ENCODE measurements at regions of chr7 and their contacts with region 1.

Region 1: GRCh38 chr7:134605973-134606923 is 40.4 kb upstream of the BPGM start:
- DNase-seq: peak; percentile 62 to 67
- ATAC-seq: peak; percentile 87 to 96 (median 90)
- H3K4me3 ChIP-seq: no peak overlapping the region
- H3K27ac ChIP-seq: no peak overlapping the region
- H3K4me1 ChIP-seq: no peaks in the 10 kb centered on the region
- H3K27me3 ChIP-seq: peaks cover 0 to 3% (median 0%) of the 10 kb centered on the region in 3 donors
- CTCF ChIP-seq: peak; percentile 94

Region 2: DNA sequence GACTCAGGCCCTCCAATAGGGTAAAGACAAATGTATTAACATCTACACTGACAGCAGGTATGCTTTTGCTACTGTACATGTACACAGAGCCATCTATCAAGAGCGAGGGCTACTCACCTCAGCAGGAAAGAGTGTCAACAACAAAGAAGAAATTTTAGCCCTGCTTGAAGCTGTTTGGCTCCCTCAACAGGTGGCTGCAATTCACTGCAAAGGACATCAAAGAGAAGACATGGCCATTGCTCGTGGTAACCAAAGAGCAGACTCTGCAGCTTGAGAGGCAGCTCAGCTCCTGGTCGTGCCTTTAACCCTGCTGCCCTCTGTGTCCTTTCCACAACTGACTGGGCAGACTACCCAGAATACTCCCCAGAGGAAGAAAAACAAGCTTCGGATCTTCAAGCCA is 52.3 kb before region 1 on chr7:
- intact Hi-C with region 1: loop called (anchors 5 kb)
- DNase-seq: no peak
- ATAC-seq: no peak
- H3K4me3 ChIP-seq: no peak overlapping the region
- H3K27ac ChIP-seq: no peak overlapping the region
- H3K4me1 ChIP-seq: peaks cover 10% of the 10 kb centered on the region
- H3K27me3 ChIP-seq: no peaks in the 10 kb centered on the region
- CTCF ChIP-seq: peak; percentile 14

Measured in psoas muscle (tissue), 8 donors.